Left colon (tissue), 2 donors: ENCODE measurements at regions of chr14 and their contacts with region 1.

Region 1: GRCh38 chr14:33839193-33840076 is 111.4 kb downstream of the EGLN3 start:
- DNase-seq: peak in 1 of 2 donors; percentile 61
- ATAC-seq: peak; percentile 53

Region 2: GRCh38 chr14:34098045-34098984 is 258.9 kb after region 1 on chr14:
- intact Hi-C with region 1: loop called in 1 of 2 experiments (anchors 5 kb)
- DNase-seq: peak in 1 of 2 donors; percentile 24
- ATAC-seq: peak; percentile 77

Region 3: DNA sequence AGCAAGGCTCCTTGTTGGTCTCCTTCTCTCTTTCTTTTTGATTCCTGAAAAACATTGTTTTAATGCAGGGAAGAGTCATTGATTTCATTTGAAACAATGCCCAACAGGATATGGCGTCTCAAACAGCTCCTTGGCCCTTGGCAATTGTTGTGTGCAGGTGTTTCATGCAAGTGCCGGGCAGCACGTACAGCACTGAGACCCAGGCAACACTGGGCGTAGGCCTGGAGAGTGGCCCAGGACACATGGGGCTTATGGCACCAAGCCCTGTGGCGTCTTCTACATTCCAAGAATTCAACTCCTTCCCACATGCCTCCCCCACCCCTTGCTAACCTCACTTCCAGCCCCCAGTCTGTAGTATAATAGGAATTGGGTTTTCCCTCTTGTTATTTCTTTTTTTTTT is 392.2 kb after region 1 on chr14:
- intact Hi-C with region 1: loop called in 1 of 2 experiments (anchors 5 kb)
- DNase-seq: peak; percentile 44 to 53
- ATAC-seq: peak; percentile 54

Region 4: GRCh38 chr14:34300882-34301734 is 461.7 kb after region 1 on chr14:
- intact Hi-C with region 1: loop called in 1 of 2 experiments (anchors 5 kb)
- DNase-seq: no peak
- ATAC-seq: peak; percentile 50